ENCODE measurements at regions of chr17 and their contacts with region 1.

Region 1: DNA sequence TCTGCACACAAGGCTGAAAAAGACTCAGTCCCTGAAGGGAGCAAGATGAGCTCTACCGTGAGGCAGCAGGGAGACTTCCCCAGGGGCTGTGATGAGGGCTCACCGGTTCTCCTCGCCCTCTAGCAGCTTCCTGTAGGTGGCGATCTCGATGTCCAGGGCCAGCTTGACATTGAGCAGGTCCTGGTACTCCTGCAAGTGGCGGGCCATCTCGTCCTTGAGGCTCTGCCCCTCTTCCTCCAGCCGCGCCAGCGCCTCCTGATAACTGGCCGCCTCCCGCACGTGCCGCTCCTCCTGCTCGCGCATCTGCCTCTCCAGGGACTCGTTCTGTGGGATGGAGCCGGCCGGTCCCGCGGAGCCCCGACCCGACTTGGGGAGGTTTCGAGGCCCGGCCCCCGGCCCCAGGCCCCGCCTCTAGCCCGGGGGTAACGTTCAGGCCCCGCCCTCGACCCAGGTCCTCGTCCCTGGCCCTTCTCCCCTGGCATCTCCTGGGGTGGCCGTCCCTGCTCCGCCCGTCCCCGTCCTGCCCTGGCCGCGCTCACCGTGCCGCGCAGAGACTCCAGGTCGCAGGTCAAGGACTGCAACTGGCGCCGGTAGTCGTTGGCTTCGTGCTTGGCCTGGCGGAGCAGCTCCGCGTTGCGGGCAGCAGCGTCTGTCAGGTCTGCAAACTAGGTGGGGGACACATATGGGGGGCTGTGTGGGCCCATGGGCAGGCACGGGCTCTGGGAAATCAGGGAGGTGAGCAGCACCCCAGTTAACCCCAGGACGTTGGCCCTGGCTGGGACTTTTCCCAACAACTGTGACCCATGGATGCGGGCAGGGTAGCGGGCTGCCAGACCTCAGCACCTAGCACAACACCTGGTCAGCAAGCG is 3.9 kb downstream of the GFAP start:
- DNase-seq: peak; percentile 60 to 84
- H3K4me3 ChIP-seq: peak overlapping the region; percentile 10; the same call in 1 of the 2 replicates
- H3K4me1 ChIP-seq: no peaks in the 10 kb centered on the region
- H3K27me3 ChIP-seq: peaks cover 10% of the 10 kb centered on the region

Region 2: GRCh38 chr17:44556832-44557606 is 354.3 kb before region 1 on chr17 and contains the start of gene FZD2:
- in situ Hi-C with region 1: no loop called
- DNase-seq: peak; percentile 95 to 96
- H3K4me3 ChIP-seq: peak within 1 kb of the TSS; percentile 47
- H3K4me1 ChIP-seq: peaks cover 15% of the 10 kb centered on the region
- H3K27me3 ChIP-seq: no peaks in the 10 kb centered on the region

Region 3: GRCh38 chr17:44708401-44709181 is 202.8 kb before region 1 on chr17 and contains the start of gene DBF4B:
- in situ Hi-C with region 1: no loop called
- DNase-seq: peak; percentile 82 to 92
- H3K4me3 ChIP-seq: peak within 1 kb of the TSS; percentile 83
- H3K4me1 ChIP-seq: peaks cover 13% of the 10 kb centered on the region
- H3K27me3 ChIP-seq: no peaks in the 10 kb centered on the region

Region 4: GRCh38 chr17:45029758-45030423 is 118.5 kb after region 1 on chr17:
- in situ Hi-C with region 1: loop called (anchors 5 kb)
- DNase-seq: no peak
- H3K4me3 ChIP-seq: no peak overlapping the region
- H3K4me1 ChIP-seq: no peaks in the 10 kb centered on the region
- H3K27me3 ChIP-seq: no peaks in the 10 kb centered on the region

Region 5: GRCh38 chr17:45729294-45729907 is 818.0 kb after region 1 on chr17:
- in situ Hi-C with region 1: no loop called
- DNase-seq: no peak
- H3K4me3 ChIP-seq: no peak overlapping the region
- H3K4me1 ChIP-seq: no peaks in the 10 kb centered on the region
- H3K27me3 ChIP-seq: peaks cover 13% of the 10 kb centered on the region